GM12878 (cell line): ENCODE measurements at regions of chr9 and their contacts with region 1.

Region 1: GRCh38 chr9:3894772-3895171 is 369.0 kb upstream of the RFX3 start:
- DNase-seq: no peak
- ATAC-seq: no peak
- H3K4me3 ChIP-seq: no peak overlapping the region
- H3K27ac ChIP-seq: no peak overlapping the region
- H3K4me1 ChIP-seq: no peaks in the 10 kb centered on the region
- H3K27me3 ChIP-seq: no peaks in the 10 kb centered on the region
- CTCF ChIP-seq: no peak
- EP300 ChIP-seq: no peak
- POLR2A ChIP-seq: no peak
- RAD21 ChIP-seq: no peak

Region 2: DNA sequence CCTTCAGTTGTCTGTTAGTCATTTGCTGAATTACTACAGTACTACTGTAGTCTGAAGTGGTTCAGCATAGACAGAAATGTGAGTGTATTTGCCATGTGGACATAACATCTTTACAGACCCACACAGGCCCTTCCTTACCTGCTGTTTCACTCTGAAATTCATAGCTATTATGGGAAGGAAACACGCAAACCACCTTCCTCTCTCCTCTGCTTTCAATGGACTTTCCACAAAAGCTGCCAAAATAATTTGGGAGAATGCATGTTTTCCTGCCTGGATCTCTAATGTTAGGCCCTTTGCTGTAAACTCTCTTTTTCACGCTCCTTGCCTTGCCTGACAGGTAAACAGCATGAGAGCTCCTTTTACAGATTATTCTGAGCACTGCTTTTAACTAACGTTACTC is 111.1 kb after region 1 on chr9:
- CTCF ChIA-PET with region 1: no interaction called
- POLR2A ChIA-PET with region 1: interaction called, 10 read pairs
- RAD21 ChIA-PET with region 1: no interaction called
- SMC1A ChIA-PET with region 1: no interaction called
- in situ Hi-C with region 1: no loop called
- intact Hi-C with region 1: no loop called
- DNase-seq: no peak
- ATAC-seq: no peak
- H3K4me3 ChIP-seq: no peak overlapping the region
- H3K27ac ChIP-seq: no peak overlapping the region
- H3K4me1 ChIP-seq: no peaks in the 10 kb centered on the region
- H3K27me3 ChIP-seq: no peaks in the 10 kb centered on the region; a peak in 1 of 4 replicates
- CTCF ChIP-seq: no peak
- EP300 ChIP-seq: no peak
- POLR2A ChIP-seq: no peak
- RAD21 ChIP-seq: no peak

Region 3: DNA sequence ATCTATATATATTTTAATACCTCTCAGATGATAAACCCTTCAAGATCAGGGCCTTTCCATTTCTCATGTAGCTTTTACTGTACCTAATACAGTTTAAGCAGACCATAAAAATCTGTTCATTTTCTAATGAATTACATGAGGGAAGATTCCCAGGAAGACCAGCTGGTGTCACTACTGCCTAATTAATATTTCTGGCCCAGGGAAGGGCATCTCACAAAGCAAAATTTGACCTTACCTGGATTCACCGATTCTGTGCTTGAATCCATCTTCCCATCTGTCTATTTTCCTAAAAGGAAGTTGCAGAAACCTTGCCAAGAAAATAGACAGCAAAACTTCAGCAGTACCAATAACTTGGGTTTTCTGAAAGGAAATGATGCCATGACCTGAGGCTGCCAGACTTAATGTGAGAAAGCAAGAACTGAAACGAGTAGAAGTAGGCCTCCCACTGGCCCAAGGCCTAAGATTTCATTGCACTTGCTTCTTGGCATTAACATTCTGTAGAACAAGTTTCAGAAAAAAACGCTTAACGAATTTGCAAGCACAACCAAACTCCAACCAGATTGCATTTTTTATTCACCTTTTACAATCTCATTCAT is 488.0 kb after region 1 on chr9:
- CTCF ChIA-PET with region 1: no interaction called
- POLR2A ChIA-PET with region 1: no interaction called
- RAD21 ChIA-PET with region 1: no interaction called
- SMC1A ChIA-PET with region 1: no interaction called
- in situ Hi-C with region 1: no loop called
- intact Hi-C with region 1: no loop called
- DNase-seq: peak; percentile 40
- ATAC-seq: peak; percentile 87
- H3K4me3 ChIP-seq: no peak overlapping the region
- H3K27ac ChIP-seq: no peak overlapping the region
- H3K4me1 ChIP-seq: peaks cover 5% of the 10 kb centered on the region; the same call in 1 of the 2 replicates
- H3K27me3 ChIP-seq: no peaks in the 10 kb centered on the region
- CTCF ChIP-seq: peak; percentile 51 to 73 (median 58); a peak in 5 of 6 replicates
- EP300 ChIP-seq: no peak
- POLR2A ChIP-seq: no peak
- RAD21 ChIP-seq: peak; percentile 87